IMR-90 (cell line): ENCODE measurements at regions of chr1 and their contacts with region 1.

Region 1: DNA sequence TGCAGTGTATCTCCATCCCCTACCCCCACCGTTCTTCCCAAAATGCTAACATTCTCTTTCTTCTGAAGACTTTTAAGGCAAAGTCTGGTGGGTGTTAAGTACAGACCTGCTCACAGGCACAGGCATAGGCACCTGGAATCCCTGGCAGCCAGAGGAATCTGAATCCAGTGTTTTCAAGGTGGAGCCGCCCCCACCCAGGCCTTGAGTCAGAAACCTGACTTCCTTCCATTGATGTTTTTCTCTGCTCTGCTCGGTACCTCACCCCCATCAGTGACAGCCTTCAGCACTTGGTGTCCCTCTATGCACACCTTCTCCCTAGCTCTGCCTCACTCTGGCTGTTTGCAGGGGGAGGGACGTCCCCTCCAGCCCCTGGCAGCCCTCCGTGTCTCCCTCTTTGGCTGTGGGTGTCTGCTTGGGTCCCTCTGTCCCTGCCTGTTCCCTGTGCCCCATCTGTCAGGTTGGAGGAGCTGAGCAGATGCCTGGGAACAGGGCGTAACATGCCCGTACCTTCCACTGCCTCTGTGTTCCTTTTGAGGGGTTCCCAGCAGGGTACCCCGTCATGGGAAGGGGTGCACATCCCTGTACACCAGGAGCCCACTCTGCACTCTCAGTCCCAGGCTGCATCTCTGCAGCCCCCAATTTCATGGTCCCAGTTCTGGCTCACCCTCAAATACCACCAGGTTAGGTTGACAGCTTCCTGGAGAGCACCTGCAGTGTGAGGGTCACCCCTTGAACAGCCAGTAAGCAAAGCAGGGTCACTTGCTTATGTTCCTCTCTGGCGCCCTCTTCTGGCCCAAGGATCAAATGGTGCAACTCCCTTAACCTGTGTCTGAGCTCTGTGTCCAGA is 6.7 kb downstream of the NCDN start:
- DNase-seq: peak; percentile 78
- ATAC-seq: peak; percentile 62
- H3K4me3 ChIP-seq: no peak overlapping the region
- H3K27ac ChIP-seq: no peak overlapping the region
- H3K4me1 ChIP-seq: peaks cover under 1% of the 10 kb centered on the region; the same call in 1 of the 2 replicates
- H3K27me3 ChIP-seq: no peaks in the 10 kb centered on the region
- CTCF ChIP-seq: peak; percentile 79
- POLR2A ChIP-seq: no peak
- RAD21 ChIP-seq: peak; percentile 78

Region 2: GRCh38 chr1:35192853-35193664 is 371.2 kb before region 1 on chr1 and contains the start of gene SFPQ:
- CTCF ChIA-PET with region 1: no interaction called
- POLR2A ChIA-PET with region 1: no interaction called
- dilution Hi-C with region 1: no loop called
- in situ Hi-C with region 1: loop called (anchors 10 kb)
- intact Hi-C with region 1: no loop called
- DNase-seq: peak; percentile 99
- ATAC-seq: peak; percentile 94
- H3K4me3 ChIP-seq: peak within 1 kb of the TSS; percentile 74
- H3K27ac ChIP-seq: peak within 1 kb of the TSS; percentile 95
- H3K4me1 ChIP-seq: peaks cover 2% of the 10 kb centered on the region
- H3K27me3 ChIP-seq: no peaks in the 10 kb centered on the region
- CTCF ChIP-seq: no peak
- POLR2A ChIP-seq: peak; percentile 100
- RAD21 ChIP-seq: no peak
- total RNA-seq, gene SFPQ: 53.9 and 121 TPM in 2 replicates

Region 3: DNA sequence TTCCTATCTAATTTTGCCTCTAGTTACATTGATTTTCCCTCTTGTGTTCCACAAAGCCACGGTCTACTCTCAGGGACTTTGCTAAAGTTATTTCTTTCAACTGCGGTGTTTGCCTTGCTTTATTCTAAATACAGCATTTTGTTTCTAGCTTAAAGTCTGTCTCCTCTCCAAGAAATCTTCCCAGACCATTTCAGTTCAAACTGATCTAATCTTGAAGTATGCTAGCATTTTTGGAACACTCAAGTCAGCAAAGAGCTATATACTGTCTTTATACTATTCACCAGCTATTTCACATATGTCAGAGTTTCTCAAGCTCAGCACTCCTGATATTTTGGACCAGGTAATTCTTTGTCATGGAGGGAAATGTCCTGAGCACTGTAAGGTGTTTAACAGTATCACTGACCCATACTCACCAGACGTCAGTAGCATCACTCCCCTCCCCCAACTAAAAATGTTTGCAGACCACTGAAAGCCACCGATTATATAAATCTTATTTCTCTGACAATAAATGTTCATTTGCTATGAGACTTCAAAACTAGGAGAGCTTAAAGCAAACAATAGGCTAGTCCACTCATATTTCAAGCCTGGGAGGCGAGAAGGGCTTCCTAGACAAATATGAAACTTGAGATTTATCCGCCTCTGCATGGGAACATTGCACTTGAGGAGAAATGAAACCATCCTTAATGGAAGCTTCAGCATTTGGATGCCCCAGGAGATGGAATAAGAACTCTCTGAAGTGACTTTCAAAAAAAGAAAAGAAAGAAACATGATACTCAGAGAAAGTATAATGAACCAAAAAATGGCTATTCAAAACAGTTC is 88.2 kb before region 1 on chr1:
- CTCF ChIA-PET with region 1: no interaction called
- POLR2A ChIA-PET with region 1: no interaction called
- dilution Hi-C with region 1: no loop called
- in situ Hi-C with region 1: no loop called
- intact Hi-C with region 1: no loop called
- DNase-seq: peak; percentile 6
- ATAC-seq: no peak
- H3K4me3 ChIP-seq: no peak overlapping the region
- H3K27ac ChIP-seq: no peak overlapping the region
- H3K4me1 ChIP-seq: no peaks in the 10 kb centered on the region
- H3K27me3 ChIP-seq: no peaks in the 10 kb centered on the region
- CTCF ChIP-seq: no peak
- POLR2A ChIP-seq: no peak
- RAD21 ChIP-seq: no peak

Region 4: DNA sequence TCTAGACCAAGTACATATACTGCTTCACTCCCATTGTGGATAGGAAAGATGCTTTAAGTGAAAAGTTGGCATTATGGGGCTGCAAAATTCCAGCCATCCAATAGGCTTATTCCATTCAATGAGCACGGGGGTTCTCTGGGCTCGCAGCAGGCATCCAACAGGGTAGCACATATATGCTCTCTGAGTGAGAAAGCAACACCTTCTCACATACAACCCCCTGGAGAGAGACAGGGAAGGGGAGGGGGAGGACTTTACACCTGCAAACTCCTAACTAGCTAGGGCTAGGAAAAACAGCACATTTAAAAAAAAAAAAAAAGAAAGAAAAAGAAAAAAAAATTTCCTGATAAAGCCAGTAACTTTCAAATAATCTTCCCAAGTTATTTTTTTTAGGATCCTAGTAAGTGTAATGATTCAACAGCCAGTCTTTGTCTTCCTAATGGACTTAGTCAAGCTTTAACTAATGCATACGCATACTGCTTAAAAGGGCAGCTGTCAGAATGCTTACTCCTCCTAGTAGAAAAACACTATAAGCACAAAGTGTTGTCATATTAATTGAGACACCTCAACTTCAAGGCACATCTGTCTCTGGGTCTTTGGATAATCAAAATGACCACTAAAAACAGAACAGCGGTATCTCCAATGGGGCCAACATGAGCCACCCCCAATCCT is 58.4 kb after region 1 on chr1:
- CTCF ChIA-PET with region 1: no interaction called
- POLR2A ChIA-PET with region 1: no interaction called
- dilution Hi-C with region 1: no loop called
- in situ Hi-C with region 1: no loop called
- intact Hi-C with region 1: no loop called
- DNase-seq: no peak
- ATAC-seq: no peak
- H3K4me3 ChIP-seq: no peak overlapping the region
- H3K27ac ChIP-seq: no peak overlapping the region
- H3K4me1 ChIP-seq: no peaks in the 10 kb centered on the region
- H3K27me3 ChIP-seq: no peaks in the 10 kb centered on the region
- CTCF ChIP-seq: no peak
- POLR2A ChIP-seq: no peak
- RAD21 ChIP-seq: no peak

Region 5: GRCh38 chr1:35715568-35716002 is 151.3 kb after region 1 on chr1:
- CTCF ChIA-PET with region 1: interaction called, 5 read pairs
- POLR2A ChIA-PET with region 1: interaction called, 3 read pairs
- dilution Hi-C with region 1: no loop called
- in situ Hi-C with region 1: no loop called
- intact Hi-C with region 1: loop called (anchors 1 kb)
- DNase-seq: peak; percentile 69
- ATAC-seq: peak; percentile 30
- H3K4me3 ChIP-seq: no peak overlapping the region
- H3K27ac ChIP-seq: no peak overlapping the region
- H3K4me1 ChIP-seq: peaks cover 9% of the 10 kb centered on the region
- H3K27me3 ChIP-seq: no peaks in the 10 kb centered on the region
- CTCF ChIP-seq: peak; percentile 75
- POLR2A ChIP-seq: no peak
- RAD21 ChIP-seq: peak; percentile 71

Region 6: GRCh38 chr1:35726450-35727433 is 162.5 kb after region 1 on chr1:
- CTCF ChIA-PET with region 1: interaction called, 10 read pairs
- POLR2A ChIA-PET with region 1: no interaction called
- dilution Hi-C with region 1: no loop called
- in situ Hi-C with region 1: loop called (anchors 5 kb)
- intact Hi-C with region 1: loop called (anchors 1 kb)
- DNase-seq: peak; percentile 58
- ATAC-seq: peak; percentile 97
- H3K4me3 ChIP-seq: no peak overlapping the region
- H3K27ac ChIP-seq: no peak overlapping the region
- H3K4me1 ChIP-seq: no peaks in the 10 kb centered on the region
- H3K27me3 ChIP-seq: no peaks in the 10 kb centered on the region
- CTCF ChIP-seq: peak; percentile 85
- POLR2A ChIP-seq: no peak
- RAD21 ChIP-seq: peak; percentile 87

Region 7: DNA sequence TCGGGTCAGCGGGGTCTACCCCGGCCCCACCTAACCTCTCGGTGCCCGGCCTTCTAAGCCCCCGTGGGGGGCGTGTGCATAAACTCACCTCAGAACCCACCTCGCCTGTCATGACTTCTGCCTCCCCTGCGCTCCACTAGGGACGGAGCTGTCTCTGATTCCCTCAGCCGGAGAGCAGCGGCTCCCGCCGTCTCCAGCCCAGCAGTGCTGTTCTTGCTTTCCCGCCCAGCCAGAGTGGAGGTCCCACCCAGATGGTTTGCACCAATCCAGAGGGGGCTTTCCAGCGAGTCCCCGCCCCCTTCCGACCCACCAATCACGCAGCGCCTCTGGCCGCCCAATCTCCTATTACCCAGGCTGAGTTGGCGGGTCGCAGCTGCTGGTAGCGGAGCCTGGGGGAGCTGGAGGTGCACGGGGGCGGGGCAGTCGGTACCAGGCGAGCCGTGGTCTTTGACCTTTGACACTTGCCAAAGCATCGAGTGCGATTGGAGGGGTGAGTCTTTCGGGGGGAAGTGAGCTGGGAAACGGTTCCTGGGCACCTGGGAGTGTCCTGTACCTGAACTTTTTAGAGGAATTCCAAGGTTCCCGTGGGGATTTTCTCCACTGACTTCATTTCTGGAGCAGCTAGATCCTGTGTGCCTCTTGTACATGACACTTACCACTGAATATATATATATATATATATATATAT is 205.6 kb after region 1 on chr1 and contains the start of gene CLSPN:
- CTCF ChIA-PET with region 1: interaction called, 4 read pairs
- POLR2A ChIA-PET with region 1: no interaction called
- dilution Hi-C with region 1: no loop called
- in situ Hi-C with region 1: no loop called
- intact Hi-C with region 1: loop called (anchors 1 kb)
- DNase-seq: peak; percentile 94
- ATAC-seq: peak; percentile 97
- H3K4me3 ChIP-seq: peak within 1 kb of the TSS; percentile 82
- H3K27ac ChIP-seq: peak within 1 kb of the TSS; percentile 88
- H3K4me1 ChIP-seq: peaks cover 2% of the 10 kb centered on the region
- H3K27me3 ChIP-seq: no peaks in the 10 kb centered on the region
- CTCF ChIP-seq: no peak
- POLR2A ChIP-seq: peak; percentile 81; the same call in 1 of the 2 replicates
- RAD21 ChIP-seq: no peak
- total RNA-seq, gene CLSPN: 14.3 and 14.4 TPM in 2 replicates